Upper lobe of right lung (tissue), 1 donor: ENCODE measurements at regions of chr10 and their contacts with region 1.

Region 1: GRCh38 chr10:62231371-62231770 is 37.3 kb downstream of the RTKN2 start:
- DNase-seq: no peak
- ATAC-seq: no peak
- H3K4me3 ChIP-seq: no peak overlapping the region
- H3K27ac ChIP-seq: no peak overlapping the region
- H3K4me1 ChIP-seq: peaks cover 7% of the 10 kb centered on the region
- H3K27me3 ChIP-seq: no peaks in the 10 kb centered on the region
- CTCF ChIP-seq: no peak

Region 2: GRCh38 chr10:62038609-62039190 is 192.7 kb before region 1 on chr10:
- intact Hi-C with region 1: loop called (anchors 10 kb)
- DNase-seq: peak; percentile 80
- ATAC-seq: peak; percentile 91
- H3K4me3 ChIP-seq: peak overlapping the region; percentile 20
- H3K27ac ChIP-seq: peak overlapping the region; percentile 70
- H3K4me1 ChIP-seq: peaks cover 27% of the 10 kb centered on the region
- H3K27me3 ChIP-seq: no peaks in the 10 kb centered on the region
- CTCF ChIP-seq: peak; percentile 82

Region 3: DNA sequence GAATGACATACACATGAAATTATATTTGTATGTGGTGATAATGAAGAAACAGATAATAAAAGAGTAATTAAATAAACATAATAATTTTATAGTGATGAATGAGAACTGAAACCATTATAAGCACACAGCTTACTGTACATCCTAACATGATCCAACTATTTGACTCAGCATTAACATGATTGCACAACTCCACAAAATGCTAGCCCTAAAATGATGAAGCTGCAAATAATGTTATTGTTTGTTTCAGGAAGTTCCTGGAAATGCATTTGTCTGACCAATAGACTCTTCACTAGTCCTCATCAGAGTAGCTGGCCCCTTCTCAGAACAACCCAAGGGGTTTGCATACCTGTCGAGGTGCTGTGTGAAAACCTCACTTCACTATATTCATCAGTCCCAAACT is 78.2 kb before region 1 on chr10:
- intact Hi-C with region 1: no loop called
- DNase-seq: no peak
- ATAC-seq: peak; percentile 47
- H3K4me3 ChIP-seq: no peak overlapping the region
- H3K27ac ChIP-seq: no peak overlapping the region
- H3K4me1 ChIP-seq: no peaks in the 10 kb centered on the region
- H3K27me3 ChIP-seq: no peaks in the 10 kb centered on the region
- CTCF ChIP-seq: no peak